ENCODE measurements at regions of chr1 and their contacts with region 1.

Region 1: GRCh38 chr1:32992489-32993323 is 28.1 kb upstream of the RNF19B start:
- DNase-seq: peak; percentile 52
- H3K4me3 Mint-ChIP-seq: no peak overlapping the region
- H3K27ac Mint-ChIP-seq: peak overlapping the region; percentile 63
- H3K4me1 Mint-ChIP-seq: peaks cover 52% of the 10 kb centered on the region
- H3K27me3 Mint-ChIP-seq: no peaks in the 10 kb centered on the region

Region 2: GRCh38 chr1:32981003-32981901 is 11.5 kb before region 1 on chr1:
- CTCF ChIA-PET with region 1: interaction called, 12 read pairs
- POLR2A ChIA-PET with region 1: interaction called, 5 read pairs
- DNase-seq: peak; percentile 73
- H3K4me3 Mint-ChIP-seq: peak overlapping the region; percentile 53
- H3K27ac Mint-ChIP-seq: peak overlapping the region; percentile 93
- H3K4me1 Mint-ChIP-seq: peaks cover 60% of the 10 kb centered on the region
- H3K27me3 Mint-ChIP-seq: no peaks in the 10 kb centered on the region

Region 3: GRCh38 chr1:33007190-33008050 is 14.7 kb after region 1 on chr1:
- CTCF ChIA-PET with region 1: interaction called, 30 read pairs
- POLR2A ChIA-PET with region 1: interaction called, 3 read pairs
- DNase-seq: no peak
- H3K4me3 Mint-ChIP-seq: no peak overlapping the region
- H3K27ac Mint-ChIP-seq: no peak overlapping the region
- H3K4me1 Mint-ChIP-seq: peaks cover 2% of the 10 kb centered on the region
- H3K27me3 Mint-ChIP-seq: no peaks in the 10 kb centered on the region

Measured in activated CD4-positive, alpha-beta T cell treated with anti-CD3 and anti-CD28 coated beads, Interleukin-2, amount 10 ng/mL, durations not matched to agents 7 days and 5 days (primary cell).